GM12878 (cell line): ENCODE measurements at regions of chr17 and their contacts with region 1.

Region 1: DNA sequence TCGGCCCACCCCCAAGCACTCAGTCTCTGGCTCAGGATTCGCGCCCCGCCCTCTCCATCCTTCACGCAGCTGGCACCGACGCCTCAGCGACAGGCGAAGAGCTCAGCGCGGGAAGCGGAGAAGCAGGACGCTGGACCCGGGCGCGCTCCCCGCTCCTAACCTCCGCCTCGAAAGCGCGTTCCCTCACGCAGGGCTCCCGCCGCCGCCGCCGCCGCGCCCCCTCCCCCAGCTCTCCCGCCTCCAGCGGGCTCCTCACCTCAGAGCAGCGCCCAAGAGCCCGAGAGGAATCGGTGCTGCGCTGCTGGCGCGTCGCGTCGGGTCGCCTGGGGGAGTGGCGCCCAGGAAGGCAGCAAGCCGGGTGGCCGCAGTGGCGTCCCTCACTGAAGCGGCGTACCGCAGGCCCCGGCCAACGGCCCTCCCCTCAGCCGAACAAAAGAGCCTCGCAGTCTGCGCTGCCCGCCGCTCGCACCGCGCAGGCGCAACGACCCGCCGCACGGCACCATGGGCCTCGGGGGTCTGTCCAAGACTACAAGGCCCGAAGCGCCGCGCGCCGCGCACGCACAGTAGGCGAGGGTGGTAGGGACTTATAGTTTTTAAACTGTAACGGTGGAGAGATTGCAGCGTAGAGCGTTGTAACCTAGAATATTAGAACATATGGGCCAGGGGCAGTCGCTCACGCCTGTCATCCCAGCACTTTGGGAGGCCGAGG is at the start of gene CBX1:
- DNase-seq: peak; percentile 89
- ATAC-seq: peak; percentile 98
- H3K4me3 ChIP-seq: peak within 1 kb of the TSS; percentile 87
- H3K27ac ChIP-seq: peak within 1 kb of the TSS; percentile 80
- H3K4me1 ChIP-seq: peaks cover 23% of the 10 kb centered on the region
- H3K27me3 ChIP-seq: no peaks in the 10 kb centered on the region
- CTCF ChIP-seq: no peak
- EP300 ChIP-seq: no peak
- POLR2A ChIP-seq: peak; percentile 74
- RAD21 ChIP-seq: no peak
- polyA plus RNA-seq, gene CBX1: 11.8 to 20.3 TPM

Region 2: GRCh38 chr17:47964856-47965255 is 136.3 kb before region 1 on chr17:
- CTCF ChIA-PET with region 1: no interaction called
- POLR2A ChIA-PET with region 1: no interaction called
- RAD21 ChIA-PET with region 1: no interaction called
- SMC1A ChIA-PET with region 1: no interaction called
- in situ Hi-C with region 1: no loop called
- intact Hi-C with region 1: no loop called
- DNase-seq: no peak
- ATAC-seq: no peak
- H3K4me3 ChIP-seq: no peak overlapping the region
- H3K27ac ChIP-seq: no peak overlapping the region
- H3K4me1 ChIP-seq: no peaks in the 10 kb centered on the region
- H3K27me3 ChIP-seq: no peaks in the 10 kb centered on the region
- CTCF ChIP-seq: no peak
- EP300 ChIP-seq: no peak
- POLR2A ChIP-seq: no peak
- RAD21 ChIP-seq: no peak

Region 3: DNA sequence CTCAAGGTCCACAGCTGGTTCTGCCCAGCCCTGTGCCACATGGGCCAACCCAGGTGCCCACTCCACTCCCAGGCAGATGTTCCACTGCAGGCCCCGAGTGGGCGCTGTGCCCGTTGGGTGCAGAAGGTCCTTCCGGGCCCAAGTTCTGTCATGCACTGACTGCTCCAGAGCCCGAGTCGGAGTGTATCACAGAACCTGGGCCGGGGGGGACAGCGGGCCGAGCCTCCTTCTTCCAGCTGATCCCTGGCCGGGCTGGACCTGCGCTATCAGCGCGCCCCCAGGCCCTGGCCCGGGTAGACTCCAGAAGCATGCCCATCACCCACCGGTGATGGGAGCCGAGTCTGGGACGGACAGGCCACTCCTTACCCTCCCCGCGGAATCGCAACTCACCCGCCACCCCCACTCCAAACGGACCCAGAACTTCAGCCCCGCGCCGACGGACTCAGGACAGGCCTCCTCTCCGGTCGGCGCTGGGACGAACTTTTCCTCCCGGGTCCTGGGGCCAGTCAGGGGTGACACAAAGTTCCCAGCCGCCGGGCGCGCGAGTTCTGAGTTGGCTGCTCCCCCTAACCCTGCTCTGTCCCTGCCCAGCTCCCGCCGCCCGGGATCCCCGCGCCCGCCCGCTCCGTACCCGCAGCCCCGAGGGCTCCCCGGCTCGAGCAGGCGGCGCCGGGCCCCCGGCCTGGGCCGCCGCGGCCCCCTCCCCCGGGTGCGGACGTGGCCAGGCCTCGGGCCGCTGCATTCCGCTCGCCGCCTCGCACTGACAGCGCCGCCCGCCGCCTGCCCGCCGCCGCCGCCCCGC is 63.9 kb before region 1 on chr17 and contains the start of gene COPZ2:
- CTCF ChIA-PET with region 1: interaction called, 19 read pairs
- POLR2A ChIA-PET with region 1: no interaction called
- RAD21 ChIA-PET with region 1: interaction called, 3 read pairs
- SMC1A ChIA-PET with region 1: no interaction called
- in situ Hi-C with region 1: no loop called
- intact Hi-C with region 1: no loop called
- DNase-seq: no peak
- ATAC-seq: peak; percentile 93
- H3K4me3 ChIP-seq: peak within 1 kb of the TSS; percentile 73
- H3K27ac ChIP-seq: no peak within 1 kb of the TSS
- H3K4me1 ChIP-seq: peaks cover 9% of the 10 kb centered on the region
- H3K27me3 ChIP-seq: peaks cover 3 to 4% of the 10 kb centered on the region in 2 experiments; a peak in 3 of 4 replicates
- CTCF ChIP-seq: peak; percentile 67 to 91 (median 73)
- EP300 ChIP-seq: no peak
- POLR2A ChIP-seq: no peak
- RAD21 ChIP-seq: peak; percentile 20; the same call in 1 of the 2 replicates
- polyA plus RNA-seq, gene COPZ2: 2.5 to 2.9 TPM

Region 4: DNA sequence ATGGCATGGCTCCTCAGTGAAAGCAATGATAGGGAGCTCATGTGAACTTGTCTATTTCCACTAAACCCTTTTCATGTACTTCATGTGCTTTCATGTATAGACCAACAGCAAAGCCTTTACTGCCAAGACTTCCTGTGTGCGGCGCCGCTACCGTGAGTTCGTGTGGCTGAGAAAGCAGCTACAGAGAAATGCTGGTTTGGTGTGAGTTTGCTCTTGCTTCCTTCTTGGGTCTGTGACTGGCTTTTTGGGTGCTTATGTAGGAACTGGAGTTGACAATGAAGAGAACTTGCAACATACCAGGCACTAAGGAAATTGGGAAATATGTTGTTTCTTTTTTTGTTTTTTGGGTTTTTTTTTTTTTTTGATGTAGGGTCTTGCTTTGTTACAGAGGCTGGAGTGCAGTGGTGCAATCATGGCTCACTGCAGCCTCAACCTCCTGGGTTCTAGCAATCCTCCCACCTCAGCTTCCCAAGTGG is 12.1 kb after region 1 on chr17:
- CTCF ChIA-PET with region 1: interaction called, 127 read pairs
- POLR2A ChIA-PET with region 1: interaction called, 32 read pairs
- RAD21 ChIA-PET with region 1: interaction called, 113 read pairs
- SMC1A ChIA-PET with region 1: interaction called, 66 read pairs
- in situ Hi-C with region 1: no loop called
- intact Hi-C with region 1: loop called (anchors 1 kb)
- DNase-seq: peak; percentile 71
- ATAC-seq: peak; percentile 55
- H3K4me3 ChIP-seq: peak overlapping the region; percentile 97
- H3K27ac ChIP-seq: peak overlapping the region; percentile 93
- H3K4me1 ChIP-seq: no peaks in the 10 kb centered on the region; the same call in none of the 2 replicates
- H3K27me3 ChIP-seq: no peaks in the 10 kb centered on the region
- CTCF ChIP-seq: no peak
- EP300 ChIP-seq: no peak
- POLR2A ChIP-seq: peak; percentile 55; the same call in 1 of the 2 replicates
- RAD21 ChIP-seq: no peak

Region 5: DNA sequence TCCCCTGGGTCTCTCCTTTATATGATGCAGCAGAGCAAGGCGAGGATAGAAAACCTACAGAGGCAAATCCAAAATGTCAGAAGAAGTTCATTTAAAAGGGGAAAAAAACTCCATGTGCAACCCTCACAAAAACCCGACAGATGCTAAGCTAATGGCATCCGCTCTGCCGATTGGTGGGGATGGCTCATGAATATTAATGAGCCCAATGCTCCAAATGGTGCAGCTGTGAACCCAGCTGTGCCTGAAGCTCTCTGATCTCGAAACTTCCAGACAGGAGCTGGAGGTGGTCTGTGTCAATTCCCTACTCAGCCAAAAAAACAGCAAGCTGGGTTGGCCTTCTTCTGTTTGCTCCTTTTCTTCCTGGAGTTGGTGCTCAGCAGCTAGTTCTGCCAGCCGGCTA is 21.9 kb after region 1 on chr17:
- CTCF ChIA-PET with region 1: interaction called, 102 read pairs
- POLR2A ChIA-PET with region 1: interaction called, 7 read pairs
- RAD21 ChIA-PET with region 1: interaction called, 3 read pairs
- SMC1A ChIA-PET with region 1: interaction called, 54 read pairs
- in situ Hi-C with region 1: no loop called
- intact Hi-C with region 1: no loop called
- DNase-seq: no peak
- ATAC-seq: no peak
- H3K4me3 ChIP-seq: no peak overlapping the region
- H3K27ac ChIP-seq: no peak overlapping the region
- H3K4me1 ChIP-seq: no peaks in the 10 kb centered on the region
- H3K27me3 ChIP-seq: no peaks in the 10 kb centered on the region
- CTCF ChIP-seq: no peak
- EP300 ChIP-seq: no peak
- POLR2A ChIP-seq: no peak
- RAD21 ChIP-seq: no peak

Region 6: GRCh38 chr17:48441231-48441711 is 340.1 kb after region 1 on chr17:
- CTCF ChIA-PET with region 1: no interaction called
- POLR2A ChIA-PET with region 1: no interaction called
- RAD21 ChIA-PET with region 1: no interaction called
- SMC1A ChIA-PET with region 1: no interaction called
- in situ Hi-C with region 1: no loop called
- intact Hi-C with region 1: no loop called
- DNase-seq: peak; percentile 96
- ATAC-seq: peak; percentile 86
- H3K4me3 ChIP-seq: peak overlapping the region; percentile 25; the same call in 1 of the 2 replicates
- H3K27ac ChIP-seq: peak overlapping the region; percentile 94
- H3K4me1 ChIP-seq: peaks cover 64% of the 10 kb centered on the region
- H3K27me3 ChIP-seq: no peaks in the 10 kb centered on the region
- CTCF ChIP-seq: no peak
- EP300 ChIP-seq: peak; percentile 85 to 91
- POLR2A ChIP-seq: no peak; the same call in 1 of the 2 replicates
- RAD21 ChIP-seq: 0 out of 2 replicates have a peak, but pooled peaks have one; percentile 1